RWPE1 (cell line): ENCODE measurements at regions of chr11 and their contacts with region 1.

Region 1: DNA sequence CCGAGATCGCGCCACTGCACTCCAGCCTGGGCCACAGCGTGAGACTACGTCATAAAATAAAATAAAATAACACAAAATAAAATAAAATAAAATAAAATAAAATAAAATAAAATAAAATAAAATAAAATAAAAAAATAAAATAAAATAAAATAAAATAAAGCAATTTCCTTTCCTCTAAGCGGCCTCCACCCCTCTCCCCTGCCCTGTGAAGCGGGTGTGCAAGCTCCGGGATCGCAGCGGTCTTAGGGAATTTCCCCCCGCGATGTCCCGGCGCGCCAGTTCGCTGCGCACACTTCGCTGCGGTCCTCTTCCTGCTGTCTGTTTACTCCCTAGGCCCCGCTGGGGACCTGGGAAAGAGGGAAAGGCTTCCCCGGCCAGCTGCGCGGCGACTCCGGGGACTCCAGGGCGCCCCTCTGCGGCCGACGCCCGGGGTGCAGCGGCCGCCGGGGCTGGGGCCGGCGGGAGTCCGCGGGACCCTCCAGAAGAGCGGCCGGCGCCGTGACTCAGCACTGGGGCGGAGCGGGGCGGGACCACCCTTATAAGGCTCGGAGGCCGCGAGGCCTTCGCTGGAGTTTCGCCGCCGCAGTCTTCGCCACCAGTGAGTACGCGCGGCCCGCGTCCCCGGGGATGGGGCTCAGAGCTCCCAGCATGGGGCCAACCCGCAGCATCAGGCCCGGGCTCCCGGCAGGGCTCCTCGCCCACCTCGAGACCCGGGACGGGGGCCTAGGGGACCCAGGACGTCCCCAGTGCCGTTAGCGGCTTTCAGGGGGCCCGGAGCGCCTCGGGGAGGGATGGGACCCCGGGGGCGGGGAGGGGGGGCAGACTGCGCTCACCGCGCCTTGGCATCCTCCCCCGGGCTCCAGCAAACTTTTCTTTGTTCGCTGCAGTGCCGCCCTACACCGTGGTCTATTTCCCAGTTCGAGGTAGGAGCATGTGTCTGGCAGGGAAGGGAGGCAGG is at the start of gene GSTP1:
- DNase-seq: peak; percentile 77
- H3K27ac ChIP-seq: peak within 1 kb of the TSS; percentile 99
- CTCF ChIP-seq: peak; percentile 87

Region 2: DNA sequence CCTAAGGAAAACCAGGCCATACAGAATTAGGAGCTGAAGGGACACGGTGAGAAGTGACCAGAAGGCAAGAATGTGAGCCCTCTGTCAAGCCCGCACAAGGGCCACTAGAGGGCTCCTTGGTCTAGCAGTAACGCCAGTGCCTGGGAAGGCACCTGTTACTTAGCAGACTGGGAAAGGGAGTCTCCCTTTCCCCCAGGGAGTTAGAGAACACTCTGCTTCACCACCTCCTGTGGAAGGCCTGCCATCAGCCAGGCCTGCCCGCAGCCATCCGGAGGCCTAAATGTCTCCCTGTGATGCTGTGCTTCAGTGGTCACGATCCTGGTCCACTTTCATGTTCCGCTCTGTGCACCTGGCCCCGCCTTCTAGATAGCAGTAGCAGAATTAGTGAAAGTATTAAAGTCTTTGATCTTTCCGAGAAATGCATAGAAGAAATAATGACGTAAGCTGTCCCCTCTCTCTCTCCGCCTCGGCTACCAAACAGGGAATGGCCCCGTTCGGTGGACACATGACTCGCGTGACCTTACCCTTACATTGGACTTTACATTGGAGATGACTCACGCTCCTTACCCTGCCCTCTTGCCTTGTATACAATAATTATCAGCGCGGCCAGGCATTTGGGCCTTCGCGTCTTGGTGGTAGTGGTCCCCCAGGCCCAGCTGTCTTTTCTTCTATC is 10.6 kb before region 1 on chr11:
- CTCF ChIA-PET with region 1: interaction called, 12 read pairs
- POLR2A ChIA-PET with region 1: no interaction called
- DNase-seq: no peak
- H3K27ac ChIP-seq: no peak overlapping the region
- CTCF ChIP-seq: peak; percentile 89

Region 3: GRCh38 chr11:67705264-67705663 is 121.7 kb after region 1 on chr11:
- CTCF ChIA-PET with region 1: no interaction called
- POLR2A ChIA-PET with region 1: no interaction called
- DNase-seq: no peak
- H3K27ac ChIP-seq: no peak overlapping the region
- CTCF ChIP-seq: no peak